ENCODE measurements at regions of chr1 and their contacts with region 1.

Region 1: DNA sequence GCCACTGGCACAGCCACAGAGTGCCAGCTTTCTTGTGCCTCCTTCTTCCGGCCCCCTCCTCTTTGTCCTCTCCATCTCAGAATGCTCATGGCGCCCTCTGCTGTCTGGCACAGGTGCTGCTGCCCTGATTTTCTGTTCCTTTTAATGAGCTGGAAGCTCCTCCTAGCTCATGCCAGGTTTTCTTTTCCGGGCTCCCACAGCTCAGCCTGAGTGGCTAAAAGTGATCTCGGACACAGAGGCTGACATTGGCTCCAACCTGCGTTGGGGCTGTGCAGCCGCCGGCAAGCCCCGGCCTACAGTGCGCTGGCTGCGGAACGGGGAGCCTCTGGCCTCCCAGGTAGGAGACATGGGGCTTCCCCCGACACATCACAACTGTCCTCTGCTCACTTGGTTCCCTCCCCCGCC is 18.7 kb downstream of the CNTN2 start:
- DNase-seq: peak; percentile 36
- ATAC-seq: peak; percentile 76
- H3K4me3 ChIP-seq: no peak overlapping the region
- H3K27ac ChIP-seq: no peak overlapping the region
- H3K4me1 ChIP-seq: no peaks in the 10 kb centered on the region; the same call in 1 of the 2 replicates
- H3K27me3 ChIP-seq: no peaks in the 10 kb centered on the region
- CTCF ChIP-seq: peak; percentile 94

Region 2: GRCh38 chr1:204975570-204976235 is 86.0 kb before region 1 on chr1:
- CTCF ChIA-PET with region 1: interaction called, 23 read pairs
- POLR2A ChIA-PET with region 1: no interaction called
- in situ Hi-C with region 1: no loop called
- intact Hi-C with region 1: no loop called
- DNase-seq: peak; percentile 33
- ATAC-seq: peak; percentile 91
- H3K4me3 ChIP-seq: no peak overlapping the region
- H3K27ac ChIP-seq: no peak overlapping the region
- H3K4me1 ChIP-seq: no peaks in the 10 kb centered on the region
- H3K27me3 ChIP-seq: no peaks in the 10 kb centered on the region; the same call in 1 of the 2 replicates
- CTCF ChIP-seq: peak; percentile 93

Measured in Panc1 (cell line).